AG04449 (cell line): ENCODE measurements at regions of chr16 and their contacts with region 1.

Region 1: GRCh38 chr16:74633686-74634085 is 26.8 kb upstream of the GLG1 start:
- DNase-seq: no peak
- H3K4me3 ChIP-seq: no peak overlapping the region
- CTCF ChIP-seq: no peak

Region 2: DNA sequence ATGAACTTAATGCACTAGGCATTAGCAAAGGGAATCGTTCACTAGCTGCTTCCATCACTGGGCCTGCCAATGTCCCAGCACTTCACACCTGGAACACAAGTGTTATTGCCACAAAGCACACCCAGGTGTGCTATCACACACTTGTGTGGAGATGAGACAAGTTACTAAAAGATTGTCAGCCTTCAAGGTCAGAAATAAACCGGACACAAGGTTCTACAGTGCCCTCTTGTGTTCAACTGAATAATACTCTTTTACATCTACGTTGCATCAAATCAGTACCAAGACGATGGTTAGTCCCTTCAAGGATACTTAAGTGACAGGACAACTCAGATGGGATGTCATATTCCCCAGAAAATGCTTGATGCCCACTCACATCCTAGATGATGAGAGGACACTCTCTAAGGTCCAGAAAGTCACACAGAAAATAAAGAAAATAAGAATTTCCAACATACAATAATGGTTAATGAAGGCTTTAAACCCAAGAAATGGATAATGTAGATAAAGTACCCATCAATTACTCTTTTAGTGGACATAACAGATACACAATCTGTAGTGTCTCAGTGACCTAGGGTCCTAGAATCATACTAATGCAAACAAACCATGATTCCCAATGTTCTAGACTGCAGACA is 10.4 kb before region 1 on chr16:
- CTCF ChIA-PET with region 1: interaction called, 18 read pairs
- POLR2A ChIA-PET with region 1: no interaction called
- DNase-seq: no peak
- H3K4me3 ChIP-seq: no peak overlapping the region
- CTCF ChIP-seq: peak; percentile 53

Region 3: GRCh38 chr16:74650966-74651567 is 17.4 kb after region 1 on chr16:
- CTCF ChIA-PET with region 1: interaction called, 15 read pairs
- POLR2A ChIA-PET with region 1: no interaction called
- DNase-seq: no peak
- H3K4me3 ChIP-seq: no peak overlapping the region
- CTCF ChIP-seq: no peak

Region 4: GRCh38 chr16:74666425-74667254 is 33.0 kb after region 1 on chr16 and contains the start of gene RFWD3:
- CTCF ChIA-PET with region 1: no interaction called
- POLR2A ChIA-PET with region 1: no interaction called
- DNase-seq: peak; percentile 95
- H3K4me3 ChIP-seq: peak within 1 kb of the TSS; percentile 88
- CTCF ChIP-seq: no peak